ENCODE measurements at regions of chr11 and their contacts with region 1.

Region 1: GRCh38 chr11:96424693-96425092 is 34.9 kb downstream of the JRKL start:
- H3K4me3 Mint-ChIP-seq: no peak overlapping the region
- H3K27ac Mint-ChIP-seq: no peak overlapping the region
- H3K4me1 Mint-ChIP-seq: no peaks in the 10 kb centered on the region
- H3K27me3 Mint-ChIP-seq: peaks cover 5% of the 10 kb centered on the region

Region 2: GRCh38 chr11:95076416-95076815 is 1348.3 kb before region 1 on chr11:
- intact Hi-C with region 1: loop called (anchors 10 kb)
- H3K4me3 Mint-ChIP-seq: no peak overlapping the region
- H3K27ac Mint-ChIP-seq: no peak overlapping the region
- H3K4me1 Mint-ChIP-seq: peaks cover 8% of the 10 kb centered on the region
- H3K27me3 Mint-ChIP-seq: peaks cover 11% of the 10 kb centered on the region

Region 3: GRCh38 chr11:95835768-95836488 is 588.8 kb before region 1 on chr11:
- intact Hi-C with region 1: loop called (anchors 1 kb)
- H3K4me3 Mint-ChIP-seq: no peak overlapping the region
- H3K27ac Mint-ChIP-seq: no peak overlapping the region
- H3K4me1 Mint-ChIP-seq: no peaks in the 10 kb centered on the region
- H3K27me3 Mint-ChIP-seq: no peaks in the 10 kb centered on the region

Measured in dendritic cell treated with granulocyte-macrophage colony-stimulating factor and Interleukin-4, amounts not matched to agents 40 ng/mL and 50 ng/mL, for 4 days (primary cell).